Gastrocnemius medialis (tissue), 4 donors: ENCODE measurements at regions of chr17 and their contacts with region 1.

Region 1: DNA sequence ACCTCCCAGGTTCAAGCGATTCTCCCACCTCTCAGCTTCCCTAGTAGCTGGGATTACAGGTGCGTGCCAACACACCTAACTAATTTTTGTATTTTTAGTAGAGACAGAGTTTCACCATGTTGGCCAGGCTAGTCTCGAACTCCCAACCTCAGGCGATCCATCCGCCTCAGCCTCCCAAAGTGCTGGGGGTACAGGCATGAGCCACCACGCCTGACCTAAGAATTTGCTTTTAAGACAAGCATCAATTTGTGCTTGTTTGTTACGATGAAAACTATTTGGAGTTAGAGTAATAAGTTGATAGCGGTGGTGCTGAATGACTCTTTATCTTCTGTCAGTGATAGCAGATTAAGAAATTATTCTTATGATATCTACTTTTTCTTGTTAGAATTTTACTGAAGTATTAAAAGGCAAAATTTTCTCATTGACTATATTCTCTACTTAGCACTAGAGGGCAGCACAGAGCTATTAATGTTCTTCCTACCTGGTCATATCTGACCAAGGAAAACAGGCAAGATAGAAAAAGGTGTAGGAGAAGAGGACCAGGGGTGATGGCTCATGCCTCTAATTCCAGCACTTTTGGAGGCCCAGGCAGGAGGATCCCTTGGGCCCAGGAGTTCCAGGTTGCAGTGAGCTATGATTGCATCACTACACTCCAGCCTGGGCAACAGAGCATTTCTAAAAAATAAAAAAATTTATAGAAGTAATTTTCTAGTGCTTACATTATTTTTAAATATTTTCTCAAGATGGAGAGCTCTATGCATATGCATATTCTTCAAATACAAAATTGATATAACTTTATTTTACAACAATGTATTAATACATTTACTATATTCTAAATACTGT is 24.5 kb downstream of the STXBP4 start:
- DNase-seq: no peak
- ATAC-seq: peak; percentile 39 to 69
- H3K4me3 ChIP-seq: no peak overlapping the region
- H3K27ac ChIP-seq: no peak overlapping the region
- H3K4me1 ChIP-seq: no peaks in the 10 kb centered on the region
- H3K27me3 ChIP-seq: no peaks in the 10 kb centered on the region
- CTCF ChIP-seq: peak; percentile 37 to 69 (median 56)
- POLR2A ChIP-seq: no peak

Region 2: DNA sequence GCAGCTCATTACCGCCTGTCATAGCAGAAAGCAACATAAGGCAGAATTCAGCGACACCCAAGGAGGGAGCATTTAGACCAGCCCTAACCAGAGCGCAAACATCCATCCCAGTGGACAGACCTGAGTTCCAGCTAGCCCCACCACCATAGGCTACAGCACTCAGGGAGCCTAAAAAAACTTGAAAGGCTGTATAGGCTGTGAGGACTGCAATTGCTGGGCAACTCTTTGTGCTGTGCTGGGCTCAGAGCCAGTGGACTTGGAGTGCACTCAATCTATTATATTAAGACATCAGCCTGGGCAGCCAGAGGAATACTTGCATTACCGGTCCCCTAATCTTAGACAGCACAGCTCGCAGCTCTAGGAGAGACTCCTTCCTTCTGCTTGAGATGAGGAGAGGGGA is 963.0 kb before region 1 on chr17:
- in situ Hi-C with region 1: no loop called
- intact Hi-C with region 1: no loop called
- DNase-seq: no peak
- ATAC-seq: no peak
- H3K4me3 ChIP-seq: no peak overlapping the region
- H3K27ac ChIP-seq: no peak overlapping the region
- H3K4me1 ChIP-seq: no peaks in the 10 kb centered on the region
- H3K27me3 ChIP-seq: no peaks in the 10 kb centered on the region
- CTCF ChIP-seq: no peak
- POLR2A ChIP-seq: no peak

Region 3: DNA sequence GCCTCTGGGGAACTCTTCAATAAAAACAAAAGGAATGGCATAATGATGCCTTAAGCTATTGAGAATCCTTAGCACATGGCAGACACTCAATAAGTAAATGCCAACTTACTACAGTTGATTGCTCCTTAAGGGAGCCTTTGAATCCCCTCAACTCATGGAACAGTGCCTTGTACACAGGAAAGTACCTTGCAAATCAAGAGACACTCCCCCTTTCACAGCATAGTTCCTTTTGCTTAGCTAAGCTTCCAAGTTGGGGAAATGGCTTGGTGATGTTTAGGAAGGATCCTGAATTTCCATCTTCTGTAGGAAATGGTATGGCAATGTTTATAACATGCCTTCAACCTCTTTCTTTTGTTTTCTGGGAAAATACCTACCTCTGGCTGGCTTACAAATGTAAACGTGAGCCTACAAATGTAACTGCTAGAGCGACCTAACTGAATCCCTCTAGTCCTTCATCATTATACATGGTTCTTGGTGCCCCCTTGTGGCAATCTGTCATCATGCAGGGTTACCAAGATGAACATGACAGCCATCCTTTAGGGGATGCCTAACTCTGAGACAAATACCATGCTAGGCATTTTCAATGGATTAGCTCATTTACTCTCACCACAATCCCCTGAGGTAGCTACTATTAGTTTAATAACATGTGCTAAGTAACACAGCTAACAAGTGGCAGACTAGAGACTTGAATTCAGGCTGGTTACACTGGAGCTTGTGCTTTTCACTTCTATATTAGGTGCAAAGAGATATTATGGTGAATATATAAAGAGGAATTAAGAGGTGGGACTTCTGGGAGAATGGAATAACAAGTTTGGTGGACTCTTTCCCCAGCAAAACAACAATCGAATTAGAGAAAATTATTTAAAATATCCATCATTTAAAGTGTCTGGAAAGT is 363.7 kb after region 1 on chr17:
- in situ Hi-C with region 1: loop called (anchors 5 to 25 kb)
- intact Hi-C with region 1: no loop called
- DNase-seq: peak; percentile 12 to 27
- ATAC-seq: peak; percentile 46 to 69
- H3K4me3 ChIP-seq: no peak overlapping the region
- H3K27ac ChIP-seq: no peak overlapping the region
- H3K4me1 ChIP-seq: no peaks in the 10 kb centered on the region
- H3K27me3 ChIP-seq: no peaks in the 10 kb centered on the region
- CTCF ChIP-seq: peak; percentile 47 to 75 (median 57)
- POLR2A ChIP-seq: no peak